Esophagus squamous epithelium (tissue), 5 donors: ENCODE measurements at regions of chr15 and their contacts with region 1.

Region 1: GRCh38 chr15:74373731-74374647 is 6.5 kb upstream of the CYP11A1 start:
- DNase-seq: peak; percentile 56
- H3K4me3 ChIP-seq: peak overlapping the region; percentile 36 to 77 (median 64)
- H3K27ac ChIP-seq: peak overlapping the region; percentile 29 to 79 (median 70)
- H3K4me1 ChIP-seq: peaks cover 8 to 29% (median 12%) of the 10 kb centered on the region in 3 donors
- H3K27me3 ChIP-seq: no peaks in the 10 kb centered on the region
- CTCF ChIP-seq: peak; percentile 83 to 94 (median 87)
- POLR2A ChIP-seq: no peak

Region 2: GRCh38 chr15:74620636-74621545 is 246.9 kb after region 1 on chr15:
- intact Hi-C with region 1: loop called (anchors 5 kb)
- DNase-seq: no peak
- H3K4me3 ChIP-seq: no peak overlapping the region
- H3K27ac ChIP-seq: no peak overlapping the region
- H3K4me1 ChIP-seq: peaks cover 31 to 59% (median 33%) of the 10 kb centered on the region in 3 donors
- H3K27me3 ChIP-seq: no peaks in the 10 kb centered on the region
- CTCF ChIP-seq: peak; percentile 66 to 93 (median 78)
- POLR2A ChIP-seq: no peak